HEK293 (cell line): ENCODE measurements at regions of chr9 and their contacts with region 1.

Region 1: GRCh38 chr9:116860509-116861120 is 173.5 kb downstream of the TRIM32 start:
- H3K4me3 ChIP-seq: no peak overlapping the region
- H3K27ac ChIP-seq: no peak overlapping the region
- H3K4me1 ChIP-seq: no peaks in the 10 kb centered on the region
- CTCF ChIP-seq: no peak

Region 2: DNA sequence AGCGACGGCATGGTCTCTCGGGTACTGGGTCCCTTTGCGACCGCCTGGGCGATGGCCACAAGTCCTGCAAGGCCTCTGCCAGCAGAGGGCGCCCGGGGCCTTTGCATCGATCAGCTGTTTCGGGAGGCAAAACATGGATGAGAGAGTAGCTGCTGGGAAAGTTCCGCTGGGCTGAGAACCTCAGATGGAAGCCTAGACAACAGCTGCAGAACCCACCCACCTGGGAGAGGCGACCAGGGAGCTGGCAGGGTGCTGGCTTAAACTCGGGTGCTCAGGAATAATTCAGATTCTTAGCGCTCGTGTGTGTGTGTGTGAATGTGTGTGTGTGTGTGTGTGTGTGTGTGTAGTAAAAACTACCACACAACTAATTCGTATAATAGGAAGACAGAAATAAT is 123.5 kb before region 1 on chr9:
- CTCF ChIA-PET with region 1: interaction called, 318 read pairs
- POLR2A ChIA-PET with region 1: interaction called, 5 read pairs
- H3K4me3 ChIP-seq: no peak overlapping the region
- H3K27ac ChIP-seq: no peak overlapping the region
- H3K4me1 ChIP-seq: no peaks in the 10 kb centered on the region
- CTCF ChIP-seq: peak; percentile 76

Region 3: DNA sequence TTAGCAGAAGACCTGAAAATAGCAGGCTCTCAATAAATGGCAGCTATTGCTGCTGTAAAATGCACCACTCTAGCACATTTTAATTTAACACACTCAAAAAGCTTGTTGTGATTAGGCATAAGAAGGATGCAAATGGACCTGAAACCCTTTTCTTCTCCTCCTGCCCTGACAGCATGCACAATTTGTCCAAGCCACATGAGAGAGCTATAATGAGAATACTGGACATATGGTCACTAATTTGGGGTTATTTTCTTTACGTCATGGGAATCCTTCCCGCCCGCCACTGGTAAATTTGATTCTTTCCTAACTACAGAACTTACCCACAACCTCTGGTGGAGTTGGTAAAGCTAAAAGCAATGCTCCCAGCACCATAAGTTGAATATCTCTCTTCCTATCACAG is 111.4 kb before region 1 on chr9:
- CTCF ChIA-PET with region 1: interaction called, 19 read pairs
- POLR2A ChIA-PET with region 1: no interaction called
- H3K4me3 ChIP-seq: no peak overlapping the region
- H3K27ac ChIP-seq: no peak overlapping the region
- H3K4me1 ChIP-seq: no peaks in the 10 kb centered on the region
- CTCF ChIP-seq: no peak

Region 4: GRCh38 chr9:116849721-116850120 is 10.9 kb before region 1 on chr9:
- CTCF ChIA-PET with region 1: interaction called, 12 read pairs
- POLR2A ChIA-PET with region 1: no interaction called
- H3K4me3 ChIP-seq: no peak overlapping the region
- H3K27ac ChIP-seq: no peak overlapping the region
- H3K4me1 ChIP-seq: no peaks in the 10 kb centered on the region
- CTCF ChIP-seq: no peak

Region 5: GRCh38 chr9:116873937-116874914 is 13.6 kb after region 1 on chr9:
- CTCF ChIA-PET with region 1: interaction called, 35 read pairs
- POLR2A ChIA-PET with region 1: no interaction called
- H3K4me3 ChIP-seq: no peak overlapping the region
- H3K27ac ChIP-seq: no peak overlapping the region
- H3K4me1 ChIP-seq: no peaks in the 10 kb centered on the region
- CTCF ChIP-seq: no peak

Region 6: DNA sequence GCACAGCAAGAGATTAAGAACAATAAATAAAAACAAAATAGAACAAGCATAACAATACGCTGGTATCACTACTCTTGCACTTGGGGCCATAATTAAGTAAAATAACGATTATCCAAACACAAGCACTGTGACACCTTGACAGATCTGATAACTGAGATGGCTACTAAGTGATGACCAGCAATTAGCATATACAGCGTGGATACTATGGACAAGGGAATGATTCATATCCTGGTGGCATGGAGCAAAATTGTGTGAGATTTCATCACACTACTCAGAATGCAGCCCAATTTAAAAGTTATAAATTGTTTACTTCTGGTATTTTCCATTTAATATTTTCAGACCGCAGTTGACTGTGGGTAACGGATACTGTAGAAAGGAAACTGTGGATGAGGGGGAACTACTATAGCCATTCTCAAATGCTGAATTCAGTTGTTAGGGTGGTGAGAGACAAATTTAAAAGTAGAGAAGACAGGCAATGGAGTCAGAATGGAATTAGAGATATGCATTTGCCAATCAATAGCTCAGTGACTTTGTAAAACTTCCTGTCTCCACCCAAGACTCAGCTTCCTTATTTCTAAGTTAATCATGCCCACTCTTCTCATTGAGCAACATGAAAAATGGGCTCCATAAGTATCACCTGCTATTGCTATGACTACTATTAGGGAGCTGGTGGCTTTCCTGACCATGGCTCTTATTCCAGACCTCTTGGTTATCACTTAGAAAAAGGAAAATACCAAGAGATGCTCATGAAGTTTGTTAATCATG is 127.3 kb after region 1 on chr9:
- CTCF ChIA-PET with region 1: no interaction called
- POLR2A ChIA-PET with region 1: no interaction called
- H3K4me3 ChIP-seq: no peak overlapping the region
- H3K27ac ChIP-seq: no peak overlapping the region
- H3K4me1 ChIP-seq: no peaks in the 10 kb centered on the region
- CTCF ChIP-seq: no peak

Region 7: DNA sequence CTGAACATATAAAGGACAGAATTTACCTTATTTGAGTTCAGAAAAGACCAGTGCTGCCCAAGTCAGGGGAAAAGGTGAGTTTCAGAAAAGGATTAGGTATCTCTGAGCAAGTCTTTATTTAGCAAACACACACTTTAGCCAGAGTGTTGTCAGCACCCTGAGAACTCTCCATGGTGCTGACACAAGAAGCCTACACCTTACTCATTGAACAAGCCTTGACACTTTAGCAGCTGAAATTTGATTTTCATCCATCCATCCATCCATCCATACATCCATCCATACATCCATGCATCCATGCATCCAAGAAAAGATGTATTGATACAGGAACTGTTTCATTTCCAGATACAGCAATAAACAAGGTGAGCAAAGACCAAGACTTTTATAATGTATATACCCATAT is 137.7 kb after region 1 on chr9:
- CTCF ChIA-PET with region 1: no interaction called
- POLR2A ChIA-PET with region 1: no interaction called
- H3K4me3 ChIP-seq: no peak overlapping the region
- H3K27ac ChIP-seq: no peak overlapping the region
- H3K4me1 ChIP-seq: no peaks in the 10 kb centered on the region
- CTCF ChIP-seq: no peak